Activated CD8-positive, alpha-beta T cell treated with anti-CD3 and anti-CD28 coated beads, Interleukin-2, amount 10 ng/mL, durations not matched to agents 7 days and 5 days (primary cell): ENCODE measurements at regions of chr5 and their contacts with region 1.

Region 1: DNA sequence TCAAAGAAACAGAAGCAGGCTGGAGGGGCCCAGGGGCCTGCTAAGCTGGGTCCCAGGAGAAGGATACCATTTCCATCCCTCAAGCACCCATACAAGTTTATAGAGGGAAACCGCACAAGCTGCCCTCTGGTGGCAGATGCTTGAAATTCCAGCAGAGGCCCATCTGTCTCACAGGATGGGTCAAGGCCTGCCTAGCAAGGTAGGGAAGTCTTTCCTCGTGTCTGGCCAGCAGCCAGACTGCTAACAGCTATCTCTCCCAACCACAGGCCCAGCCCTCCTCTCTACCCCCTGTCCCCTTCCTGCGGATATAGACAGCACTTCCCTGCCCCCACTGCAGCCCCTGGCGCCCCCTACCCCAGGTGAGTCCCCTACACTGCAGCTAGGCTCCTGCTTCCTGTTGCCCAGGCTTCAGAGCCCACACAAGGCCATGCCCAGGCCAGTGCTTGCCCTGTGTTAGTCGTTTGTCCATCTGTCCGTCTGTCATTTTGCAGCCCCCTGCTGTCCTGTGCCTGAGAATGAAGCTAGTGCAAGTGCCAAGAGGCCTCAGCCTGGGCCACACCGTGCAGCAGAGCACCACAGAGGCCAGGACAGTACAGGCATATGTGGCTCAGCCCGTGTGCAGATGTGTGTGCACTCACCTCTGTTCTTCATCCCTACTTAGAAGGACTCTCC is 26.2 kb downstream of the TCF7 start:
- DNase-seq: peak; percentile 79
- ATAC-seq: peak; percentile 55
- H3K4me3 Mint-ChIP-seq: no peak overlapping the region
- H3K27ac Mint-ChIP-seq: peak overlapping the region; percentile 71
- H3K4me1 Mint-ChIP-seq: peaks cover 64% of the 10 kb centered on the region
- H3K27me3 Mint-ChIP-seq: no peaks in the 10 kb centered on the region

Region 2: GRCh38 chr5:133652951-133653759 is 487.5 kb before region 1 on chr5:
- CTCF ChIA-PET with region 1: no interaction called
- POLR2A ChIA-PET with region 1: no interaction called
- DNase-seq: no peak
- ATAC-seq: no peak
- H3K4me3 Mint-ChIP-seq: no peak overlapping the region
- H3K27ac Mint-ChIP-seq: no peak overlapping the region
- H3K4me1 Mint-ChIP-seq: no peaks in the 10 kb centered on the region
- H3K27me3 Mint-ChIP-seq: peaks cover 29% of the 10 kb centered on the region

Region 3: GRCh38 chr5:134026521-134027268 is 114.0 kb before region 1 on chr5:
- CTCF ChIA-PET with region 1: interaction called, 12 read pairs
- POLR2A ChIA-PET with region 1: interaction called, 4 read pairs
- DNase-seq: peak; percentile 68
- ATAC-seq: peak; percentile 96
- H3K4me3 Mint-ChIP-seq: no peak overlapping the region
- H3K27ac Mint-ChIP-seq: no peak overlapping the region
- H3K4me1 Mint-ChIP-seq: no peaks in the 10 kb centered on the region
- H3K27me3 Mint-ChIP-seq: peaks cover 9% of the 10 kb centered on the region

Region 4: DNA sequence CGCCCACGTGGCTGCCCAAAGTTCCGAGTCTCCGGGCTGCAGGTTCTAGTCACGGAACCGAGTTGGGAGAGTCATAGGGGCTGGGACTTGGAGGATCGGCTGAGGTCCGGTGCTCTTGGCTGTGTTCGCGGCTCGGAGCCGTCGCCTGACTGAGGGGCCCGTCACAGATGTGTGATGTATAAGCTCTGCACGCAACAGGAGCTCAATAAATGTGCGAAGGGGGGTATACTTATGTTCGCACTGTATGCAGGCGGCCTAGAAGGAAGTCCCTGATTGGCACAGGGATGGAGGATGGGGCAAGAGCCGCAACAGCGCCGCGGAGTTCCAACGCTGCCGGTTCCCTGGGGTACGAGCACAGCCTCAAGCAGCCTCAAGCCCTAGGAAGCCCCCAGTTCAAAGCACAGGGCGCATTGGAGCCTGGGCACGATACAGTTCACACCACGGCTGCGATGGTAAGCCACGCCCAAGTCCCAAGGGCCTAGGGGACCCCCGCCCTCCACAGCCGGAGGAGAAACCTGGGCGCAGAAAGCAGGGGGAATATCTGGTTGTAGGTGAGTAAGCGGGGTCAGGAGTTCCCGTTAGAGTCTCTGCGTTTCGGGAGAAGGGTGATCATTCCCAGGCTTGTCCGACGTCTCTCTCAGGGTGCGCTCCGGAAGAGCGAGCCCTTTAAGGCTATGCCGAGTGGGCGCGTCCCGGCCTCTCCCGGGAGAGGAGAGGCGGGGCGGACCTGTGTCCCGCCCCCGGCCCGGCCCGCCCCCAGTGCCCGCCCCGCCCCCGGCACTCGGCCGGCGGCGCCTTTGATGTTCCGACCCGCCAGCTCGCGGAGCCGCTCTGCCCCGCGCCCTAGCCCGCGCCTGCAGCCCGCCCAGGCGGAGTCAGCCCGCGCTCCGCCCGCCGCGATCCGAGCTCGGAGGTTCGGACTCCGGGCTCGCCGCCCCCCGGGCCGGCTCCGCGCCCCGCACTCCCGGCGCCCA is 26.5 kb before region 1 on chr5 and contains the start of gene TCF7:
- CTCF ChIA-PET with region 1: no interaction called
- POLR2A ChIA-PET with region 1: interaction called, 15 read pairs
- DNase-seq: peak; percentile 79
- ATAC-seq: peak; percentile 81
- H3K4me3 Mint-ChIP-seq: peak within 1 kb of the TSS; percentile 75
- H3K27ac Mint-ChIP-seq: peak within 1 kb of the TSS; percentile 68
- H3K4me1 Mint-ChIP-seq: peaks cover 76% of the 10 kb centered on the region
- H3K27me3 Mint-ChIP-seq: peaks cover 10% of the 10 kb centered on the region
- total RNA-seq, gene TCF7: 93.4 to 97.8 TPM

Region 5: GRCh38 chr5:134119720-134120119 is 20.9 kb before region 1 on chr5:
- CTCF ChIA-PET with region 1: interaction called, 167 read pairs
- POLR2A ChIA-PET with region 1: interaction called, 15 read pairs
- DNase-seq: no peak
- ATAC-seq: no peak
- H3K4me3 Mint-ChIP-seq: peak overlapping the region; percentile 69
- H3K27ac Mint-ChIP-seq: peak overlapping the region; percentile 73
- H3K4me1 Mint-ChIP-seq: peaks cover 88% of the 10 kb centered on the region
- H3K27me3 Mint-ChIP-seq: peaks cover 2% of the 10 kb centered on the region

Region 6: GRCh38 chr5:134125039-134126015 is 15.3 kb before region 1 on chr5:
- CTCF ChIA-PET with region 1: interaction called, 167 read pairs
- POLR2A ChIA-PET with region 1: interaction called, 14 read pairs
- DNase-seq: no peak
- ATAC-seq: no peak
- H3K4me3 Mint-ChIP-seq: peak overlapping the region; percentile 12
- H3K27ac Mint-ChIP-seq: peak overlapping the region; percentile 61
- H3K4me1 Mint-ChIP-seq: peaks cover 98% of the 10 kb centered on the region
- H3K27me3 Mint-ChIP-seq: no peaks in the 10 kb centered on the region

Region 7: GRCh38 chr5:134153657-134154056 is 13.0 kb after region 1 on chr5:
- CTCF ChIA-PET with region 1: interaction called, 24 read pairs
- POLR2A ChIA-PET with region 1: interaction called, 6 read pairs
- DNase-seq: no peak
- ATAC-seq: no peak
- H3K4me3 Mint-ChIP-seq: no peak overlapping the region
- H3K27ac Mint-ChIP-seq: no peak overlapping the region
- H3K4me1 Mint-ChIP-seq: peaks cover 28% of the 10 kb centered on the region
- H3K27me3 Mint-ChIP-seq: no peaks in the 10 kb centered on the region

Region 8: GRCh38 chr5:134281081-134281480 is 140.4 kb after region 1 on chr5:
- CTCF ChIA-PET with region 1: no interaction called
- POLR2A ChIA-PET with region 1: no interaction called
- DNase-seq: no peak
- ATAC-seq: no peak
- H3K4me3 Mint-ChIP-seq: no peak overlapping the region
- H3K27ac Mint-ChIP-seq: no peak overlapping the region
- H3K4me1 Mint-ChIP-seq: peaks cover under 1% of the 10 kb centered on the region
- H3K27me3 Mint-ChIP-seq: peaks cover 13% of the 10 kb centered on the region